ENCODE measurements at regions of chr6 and their contacts with region 1.

Region 1: DNA sequence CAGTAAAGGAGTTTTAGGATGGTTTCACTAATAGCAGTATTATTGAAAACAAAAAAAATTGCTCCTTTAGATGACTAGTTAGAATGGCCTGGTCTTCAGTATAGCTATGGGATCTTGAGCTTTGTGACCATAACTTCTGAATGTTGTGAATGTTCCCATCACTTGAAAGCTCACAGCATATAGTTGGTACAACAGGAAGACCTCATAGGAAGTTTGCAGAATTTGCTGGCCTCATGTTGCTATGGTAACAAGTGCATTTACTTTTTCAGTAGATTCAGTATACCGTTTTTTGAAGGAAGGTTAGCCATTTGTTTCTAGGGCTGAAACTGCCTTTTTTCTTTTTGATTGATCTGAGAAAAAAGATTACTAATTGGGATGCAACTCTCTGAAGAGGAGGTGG is 8.3 kb downstream of the PHF3 start:
- DNase-seq: no peak
- H3K4me3 Mint-ChIP-seq: no peak overlapping the region
- H3K27ac Mint-ChIP-seq: no peak overlapping the region
- H3K4me1 Mint-ChIP-seq: peaks cover 15% of the 10 kb centered on the region
- H3K27me3 Mint-ChIP-seq: no peaks in the 10 kb centered on the region
- CTCF ChIP-seq: no peak

Region 2: GRCh38 chr6:63677282-63677681 is 33.4 kb after region 1 on chr6:
- CTCF ChIA-PET with region 1: no interaction called
- intact Hi-C with region 1: loop called (anchors 5 kb)
- DNase-seq: no peak
- H3K4me3 Mint-ChIP-seq: no peak overlapping the region
- H3K27ac Mint-ChIP-seq: no peak overlapping the region
- H3K4me1 Mint-ChIP-seq: peaks cover 9% of the 10 kb centered on the region
- H3K27me3 Mint-ChIP-seq: no peaks in the 10 kb centered on the region
- CTCF ChIP-seq: no peak

Measured in Calu3 (cell line).